SK-N-SH (cell line): ENCODE measurements at regions of chr1 and their contacts with region 1.

Region 1: GRCh38 chr1:94061513-94062443 is 59.2 kb downstream of the ABCA4 start:
- DNase-seq: peak; percentile 79
- H3K4me3 ChIP-seq: no peak overlapping the region; a peak in 1 of 4 replicates
- H3K27ac ChIP-seq: no peak overlapping the region
- H3K4me1 ChIP-seq: peaks cover 0 to 10% of the 10 kb centered on the region in 2 experiments; a peak in 2 of 4 replicates
- H3K27me3 ChIP-seq: no peaks in the 10 kb centered on the region
- CTCF ChIP-seq: peak; percentile 82
- EP300 ChIP-seq: no peak
- RAD21 ChIP-seq: peak; percentile 94

Region 2: DNA sequence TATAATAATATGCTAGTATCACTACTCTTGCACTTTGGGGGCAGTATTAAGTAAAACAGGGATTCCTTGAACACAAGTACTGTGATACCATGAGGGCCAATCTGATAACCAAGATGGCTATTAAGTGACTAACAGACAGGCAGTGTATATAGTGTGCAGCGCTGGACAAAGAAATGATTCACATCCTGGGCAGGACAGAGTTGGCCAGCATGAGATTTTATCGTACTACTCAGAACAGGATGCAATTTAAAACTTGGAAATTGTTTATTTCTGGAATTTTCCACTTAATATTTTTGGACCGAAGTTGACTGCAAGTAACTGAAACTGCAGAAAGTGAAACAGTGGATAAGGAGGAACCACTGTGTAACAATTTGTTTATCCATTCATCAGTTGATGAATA is 257.4 kb before region 1 on chr1:
- CTCF ChIA-PET with region 1: no interaction called
- POLR2A ChIA-PET with region 1: no interaction called
- DNase-seq: no peak
- H3K4me3 ChIP-seq: peak overlapping the region; percentile 4 to 33; a peak in 3 of 4 replicates
- H3K27ac ChIP-seq: peak overlapping the region; percentile 70 to 95; a peak in 3 of 4 replicates
- H3K4me1 ChIP-seq: peaks cover 0 to 20% of the 10 kb centered on the region in 2 experiments; a peak in 3 of 4 replicates
- H3K27me3 ChIP-seq: no peaks in the 10 kb centered on the region
- CTCF ChIP-seq: 0 out of 2 replicates have a peak, but pooled peaks have one; percentile 29
- EP300 ChIP-seq: peak in 1 of 2 experiments; percentile 99; a peak in 2 of 4 replicates
- RAD21 ChIP-seq: no peak

Region 3: GRCh38 chr1:93995837-93996536 is 65.8 kb before region 1 on chr1:
- CTCF ChIA-PET with region 1: no interaction called
- POLR2A ChIA-PET with region 1: no interaction called
- DNase-seq: no peak
- H3K4me3 ChIP-seq: no peak overlapping the region
- H3K27ac ChIP-seq: no peak overlapping the region
- H3K4me1 ChIP-seq: peaks cover 4 to 15% of the 10 kb centered on the region in 2 experiments; a peak in 2 of 4 replicates
- H3K27me3 ChIP-seq: no peaks in the 10 kb centered on the region
- CTCF ChIP-seq: no peak
- EP300 ChIP-seq: no peak
- RAD21 ChIP-seq: no peak

Region 4: GRCh38 chr1:94045465-94046056 is 16.2 kb before region 1 on chr1:
- CTCF ChIA-PET with region 1: interaction called, 299 read pairs
- POLR2A ChIA-PET with region 1: interaction called, 4 read pairs
- DNase-seq: peak; percentile 72
- H3K4me3 ChIP-seq: no peak overlapping the region; a peak in 1 of 4 replicates
- H3K27ac ChIP-seq: peak overlapping the region in 1 of 2 experiments; percentile 58; a peak in 3 of 4 replicates
- H3K4me1 ChIP-seq: peaks cover 16 to 21% of the 10 kb centered on the region in 2 experiments; a peak in 3 of 4 replicates
- H3K27me3 ChIP-seq: no peaks in the 10 kb centered on the region
- CTCF ChIP-seq: peak; percentile 81
- EP300 ChIP-seq: peak; percentile 54 to 58; a peak in 3 of 4 replicates
- RAD21 ChIP-seq: peak; percentile 51

Region 5: GRCh38 chr1:94083681-94084080 is 21.9 kb after region 1 on chr1:
- CTCF ChIA-PET with region 1: interaction called, 22 read pairs
- POLR2A ChIA-PET with region 1: no interaction called
- DNase-seq: no peak
- H3K4me3 ChIP-seq: no peak overlapping the region
- H3K27ac ChIP-seq: no peak overlapping the region
- H3K4me1 ChIP-seq: peaks cover 0 to 8% of the 10 kb centered on the region in 2 experiments; a peak in 1 of 4 replicates
- H3K27me3 ChIP-seq: no peaks in the 10 kb centered on the region
- CTCF ChIP-seq: no peak
- EP300 ChIP-seq: no peak
- RAD21 ChIP-seq: no peak

Region 6: DNA sequence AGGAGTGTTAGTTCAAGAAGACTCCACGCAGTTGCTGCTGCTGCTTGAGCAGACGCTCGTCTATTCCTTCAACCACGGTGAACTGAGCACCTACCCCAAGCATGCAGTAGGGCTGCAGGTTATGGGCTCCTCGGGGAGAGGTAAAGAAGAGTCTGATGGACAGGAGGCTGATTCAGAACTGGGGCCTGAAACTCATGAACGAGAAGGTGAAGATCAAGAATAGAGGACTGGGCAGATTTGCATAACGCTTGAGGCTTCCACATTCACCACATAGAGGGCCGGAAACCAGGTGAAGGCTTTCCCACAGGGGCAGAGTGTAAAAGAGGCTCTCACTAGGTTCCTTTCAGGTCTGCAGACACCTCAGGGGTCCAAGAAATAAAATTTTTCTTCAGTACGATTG is 50.1 kb after region 1 on chr1:
- CTCF ChIA-PET with region 1: no interaction called
- POLR2A ChIA-PET with region 1: no interaction called
- DNase-seq: no peak
- H3K4me3 ChIP-seq: no peak overlapping the region
- H3K27ac ChIP-seq: no peak overlapping the region
- H3K4me1 ChIP-seq: peaks cover 3 to 13% of the 10 kb centered on the region in 2 experiments; a peak in 3 of 4 replicates
- H3K27me3 ChIP-seq: no peaks in the 10 kb centered on the region
- CTCF ChIP-seq: no peak
- EP300 ChIP-seq: no peak
- RAD21 ChIP-seq: no peak

Region 7: GRCh38 chr1:94209425-94209824 is 147.6 kb after region 1 on chr1:
- CTCF ChIA-PET with region 1: interaction called, 16 read pairs
- POLR2A ChIA-PET with region 1: no interaction called
- DNase-seq: no peak
- H3K4me3 ChIP-seq: no peak overlapping the region
- H3K27ac ChIP-seq: no peak overlapping the region
- H3K4me1 ChIP-seq: peaks cover 0 to 5% of the 10 kb centered on the region in 2 experiments; a peak in 1 of 4 replicates
- H3K27me3 ChIP-seq: no peaks in the 10 kb centered on the region
- CTCF ChIP-seq: no peak
- EP300 ChIP-seq: no peak
- RAD21 ChIP-seq: no peak

Region 8: DNA sequence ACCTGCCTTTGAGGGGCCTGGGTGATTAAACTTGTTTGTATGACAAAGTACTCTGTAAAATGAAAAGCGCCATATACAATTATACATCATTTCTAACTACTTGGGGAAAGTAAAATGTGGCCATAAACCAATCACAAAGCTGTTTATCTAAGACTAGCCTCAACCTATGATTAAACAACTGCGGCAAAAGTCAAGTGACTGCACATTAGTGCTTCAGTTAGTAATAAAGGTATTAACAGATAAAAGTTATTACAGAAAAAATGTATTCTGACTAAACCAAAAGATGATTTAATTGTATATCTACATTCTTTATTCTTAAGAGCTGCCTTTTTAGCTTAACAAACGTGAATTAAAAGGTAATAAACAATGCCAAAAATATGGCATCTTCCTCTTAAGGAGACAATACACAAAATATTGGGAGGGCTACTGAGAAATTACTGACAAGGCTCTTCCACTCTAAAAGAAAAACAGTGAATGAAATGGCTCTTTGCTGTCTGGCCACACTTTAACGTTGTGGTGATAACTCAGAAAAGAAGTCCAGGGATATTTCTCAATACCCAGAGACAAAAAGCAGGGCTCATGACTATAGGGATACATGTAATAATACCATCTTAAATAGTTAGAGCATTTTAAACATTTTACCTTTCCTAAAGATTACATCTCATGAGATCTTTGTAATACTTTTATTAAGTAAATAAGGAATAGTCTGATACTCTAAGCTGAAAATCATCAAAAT is 167.0 kb after region 1 on chr1:
- CTCF ChIA-PET with region 1: interaction called, 46 read pairs
- POLR2A ChIA-PET with region 1: no interaction called
- DNase-seq: no peak
- H3K4me3 ChIP-seq: no peak overlapping the region
- H3K27ac ChIP-seq: no peak overlapping the region
- H3K4me1 ChIP-seq: peaks cover 0 to 17% of the 10 kb centered on the region in 2 experiments; a peak in 2 of 4 replicates
- H3K27me3 ChIP-seq: no peaks in the 10 kb centered on the region
- CTCF ChIP-seq: no peak
- EP300 ChIP-seq: no peak
- RAD21 ChIP-seq: no peak

Region 9: GRCh38 chr1:94237291-94238226 is 175.8 kb after region 1 on chr1 and contains the start of gene ARHGAP29:
- CTCF ChIA-PET with region 1: interaction called, 152 read pairs
- POLR2A ChIA-PET with region 1: interaction called, 3 read pairs
- DNase-seq: peak; percentile 96
- H3K4me3 ChIP-seq: peak within 1 kb of the TSS; percentile 89 to 93
- H3K27ac ChIP-seq: peak within 1 kb of the TSS; percentile 31 to 76
- H3K4me1 ChIP-seq: peaks cover 6 to 12% of the 10 kb centered on the region in 2 experiments; a peak in 2 of 4 replicates
- H3K27me3 ChIP-seq: no peaks in the 10 kb centered on the region
- CTCF ChIP-seq: no peak; the same call in 1 of the 2 replicates
- EP300 ChIP-seq: no peak
- RAD21 ChIP-seq: peak; percentile 31
- polyA plus RNA-seq, gene ARHGAP29: 20.1 and 23.3 TPM in 2 replicates

Region 10: GRCh38 chr1:94247138-94248094 is 185.6 kb after region 1 on chr1:
- CTCF ChIA-PET with region 1: interaction called, 152 read pairs
- POLR2A ChIA-PET with region 1: interaction called, 3 read pairs
- DNase-seq: peak; percentile 96
- H3K4me3 ChIP-seq: peak overlapping the region; percentile 59 to 80
- H3K27ac ChIP-seq: no peak overlapping the region; a peak in 1 of 4 replicates
- H3K4me1 ChIP-seq: peaks cover 0 to 9% of the 10 kb centered on the region in 2 experiments; a peak in 2 of 4 replicates
- H3K27me3 ChIP-seq: no peaks in the 10 kb centered on the region
- CTCF ChIP-seq: no peak
- EP300 ChIP-seq: no peak
- RAD21 ChIP-seq: no peak; the same call in 1 of the 2 replicates